AG04449 (cell line): ENCODE measurements at regions of chr2 and their contacts with region 1.

Region 1: GRCh38 chr2:46296840-46297545 is at the start of gene EPAS1:
- DNase-seq: no peak
- H3K4me3 ChIP-seq: peak within 1 kb of the TSS; percentile 83
- CTCF ChIP-seq: no peak

Region 2: GRCh38 chr2:45993476-45993991 is 303.5 kb before region 1 on chr2:
- CTCF ChIA-PET with region 1: interaction called, 13 read pairs
- POLR2A ChIA-PET with region 1: interaction called, 9 read pairs
- DNase-seq: no peak
- H3K4me3 ChIP-seq: no peak overlapping the region
- CTCF ChIP-seq: peak; percentile 70

Region 3: GRCh38 chr2:46010925-46011490 is 286.0 kb before region 1 on chr2:
- CTCF ChIA-PET with region 1: interaction called, 10 read pairs
- POLR2A ChIA-PET with region 1: interaction called, 7 read pairs
- DNase-seq: no peak
- H3K4me3 ChIP-seq: no peak overlapping the region
- CTCF ChIP-seq: peak; percentile 37

Region 4: GRCh38 chr2:46067851-46068305 is 229.1 kb before region 1 on chr2:
- CTCF ChIA-PET with region 1: interaction called, 27 read pairs
- POLR2A ChIA-PET with region 1: interaction called, 17 read pairs
- DNase-seq: peak; percentile 97
- H3K4me3 ChIP-seq: peak overlapping the region; percentile 9; the same call in 1 of the 2 replicates
- CTCF ChIP-seq: no peak

Region 5: GRCh38 chr2:46073540-46074018 is 223.4 kb before region 1 on chr2:
- CTCF ChIA-PET with region 1: no interaction called
- POLR2A ChIA-PET with region 1: interaction called, 17 read pairs
- DNase-seq: peak; percentile 93
- H3K4me3 ChIP-seq: peak overlapping the region; percentile 48
- CTCF ChIP-seq: no peak

Region 6: DNA sequence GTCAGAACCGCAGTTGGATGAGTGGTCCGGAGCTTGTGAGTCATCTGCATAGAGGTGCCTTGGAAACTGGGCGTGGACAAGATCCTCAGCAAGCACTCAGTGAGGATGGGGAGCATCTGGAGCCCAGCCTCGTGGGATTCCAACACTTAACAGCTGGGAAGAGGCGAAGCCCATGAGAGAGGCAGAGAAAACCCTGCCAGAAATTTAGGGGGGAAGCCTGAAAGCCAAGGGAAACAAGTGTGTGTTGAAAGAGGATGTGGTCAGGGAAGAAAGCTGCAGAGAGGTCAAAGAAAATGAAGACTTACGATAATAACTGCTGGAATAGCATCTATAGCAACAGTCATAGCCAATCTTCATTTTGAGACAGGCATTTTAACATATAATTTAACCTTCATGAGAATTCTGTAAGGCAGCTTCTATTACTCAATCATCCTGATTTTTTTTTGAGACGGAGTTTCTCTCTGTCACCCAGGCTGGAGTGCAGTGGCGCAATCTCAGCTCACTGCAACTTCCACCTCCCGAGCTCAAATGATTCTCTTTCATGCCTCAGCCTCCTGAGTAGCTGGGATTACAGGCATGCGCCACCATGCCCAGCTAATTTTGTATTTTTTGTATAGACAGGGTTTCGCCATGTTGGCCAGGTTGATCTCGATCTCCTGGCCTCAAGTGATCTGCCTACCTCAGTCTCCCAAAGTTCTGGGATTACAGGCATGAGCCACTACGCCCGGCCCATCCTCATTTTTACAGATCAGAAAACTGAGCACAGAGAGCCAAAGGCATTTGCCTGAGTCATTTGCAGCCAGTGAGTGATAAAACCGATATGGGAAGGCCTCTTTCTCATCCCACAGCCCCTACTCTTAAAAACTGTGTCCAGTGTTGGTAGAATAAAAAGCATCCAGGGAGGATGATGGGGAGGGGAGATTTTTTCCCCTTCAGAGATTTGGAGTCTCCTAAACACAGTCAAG is 214.2 kb before region 1 on chr2:
- CTCF ChIA-PET with region 1: interaction called, 3 read pairs
- POLR2A ChIA-PET with region 1: interaction called, 13 read pairs
- DNase-seq: peak; percentile 82
- H3K4me3 ChIP-seq: no peak overlapping the region
- CTCF ChIP-seq: no peak

Region 7: GRCh38 chr2:46171411-46171953 is 125.5 kb before region 1 on chr2:
- CTCF ChIA-PET with region 1: no interaction called
- POLR2A ChIA-PET with region 1: interaction called, 14 read pairs
- DNase-seq: peak; percentile 49
- H3K4me3 ChIP-seq: no peak overlapping the region
- CTCF ChIP-seq: no peak